ENCODE measurements at regions of chr3 and their contacts with region 1.

Region 1: GRCh38 chr3:187745201-187746058 is at the start of gene BCL6:
- DNase-seq: peak; percentile 93 to 94
- ATAC-seq: peak; percentile 48 to 51
- H3K4me3 ChIP-seq: peak within 1 kb of the TSS; percentile 70 to 94 (median 88)
- H3K27ac ChIP-seq: peak within 1 kb of the TSS; percentile 95 to 100 (median 98)
- H3K4me1 ChIP-seq: peaks cover 22% of the 10 kb centered on the region in 2 donors
- H3K27me3 ChIP-seq: no peaks in the 10 kb centered on the region
- CTCF ChIP-seq: peak in 3 of 5 experiments; percentile 16 to 35 (median 23)
- POLR2A ChIP-seq: peak; percentile 95 to 99
- total RNA-seq, gene BCL6: 223 to 363 (median 292) TPM

Region 2: GRCh38 chr3:187858041-187858440 is 112.6 kb after region 1 on chr3:
- in situ Hi-C with region 1: no loop called
- intact Hi-C with region 1: loop called (anchors 5 kb)
- DNase-seq: peak; percentile 69 to 84
- ATAC-seq: peak; percentile 89 to 91
- H3K4me3 ChIP-seq: no peak overlapping the region
- H3K27ac ChIP-seq: peak overlapping the region; percentile 74 to 87 (median 80)
- H3K4me1 ChIP-seq: peaks cover 25 to 37% of the 10 kb centered on the region in 2 donors
- H3K27me3 ChIP-seq: no peaks in the 10 kb centered on the region
- CTCF ChIP-seq: no peak
- POLR2A ChIP-seq: no peak

Region 3: DNA sequence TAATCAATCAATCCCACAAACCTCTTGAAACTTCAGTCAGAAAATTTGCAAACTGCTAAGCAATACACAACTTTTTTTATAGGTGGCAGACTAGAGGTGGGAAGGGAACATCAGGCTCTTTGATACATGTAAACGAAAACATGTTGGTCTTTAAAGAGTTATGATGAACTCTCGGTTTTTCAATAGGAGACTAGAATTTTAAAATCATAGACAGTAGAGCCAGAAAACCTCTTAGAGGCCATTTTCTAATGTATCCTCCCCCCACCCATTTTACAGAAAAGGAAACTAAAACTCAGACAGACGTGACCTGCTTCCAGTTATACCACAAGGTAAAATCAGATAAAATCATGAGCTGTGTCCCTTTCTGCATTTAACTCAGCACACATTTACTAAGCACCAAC is 229.4 kb after region 1 on chr3:
- in situ Hi-C with region 1: loop called in 1 of 4 experiments (anchors 10 kb)
- intact Hi-C with region 1: no loop called
- DNase-seq: no peak
- ATAC-seq: no peak
- H3K4me3 ChIP-seq: no peak overlapping the region
- H3K27ac ChIP-seq: peak overlapping the region; percentile 22 to 89 (median 72)
- H3K4me1 ChIP-seq: peaks cover 12 to 24% of the 10 kb centered on the region in 2 donors
- H3K27me3 ChIP-seq: no peaks in the 10 kb centered on the region
- CTCF ChIP-seq: no peak
- POLR2A ChIP-seq: no peak

Region 4: GRCh38 chr3:188154014-188154808 is 408.8 kb after region 1 on chr3 and contains the start of gene LPP:
- in situ Hi-C with region 1: loop called in 1 of 4 experiments (anchors 10 kb)
- intact Hi-C with region 1: loop called (anchors 1 kb)
- DNase-seq: peak; percentile 53 to 76
- ATAC-seq: peak; percentile 60 to 70
- H3K4me3 ChIP-seq: peak within 1 kb of the TSS; percentile 61 to 96 (median 83)
- H3K27ac ChIP-seq: peak within 1 kb of the TSS; percentile 93 to 98 (median 98)
- H3K4me1 ChIP-seq: peaks cover 44 to 54% of the 10 kb centered on the region in 2 donors
- H3K27me3 ChIP-seq: no peaks in the 10 kb centered on the region
- CTCF ChIP-seq: no peak
- POLR2A ChIP-seq: peak; percentile 78 to 80
- total RNA-seq, gene LPP: 56.0 to 65.7 (median 58.1) TPM

Region 5: GRCh38 chr3:188294823-188295487 is 549.5 kb after region 1 on chr3:
- in situ Hi-C with region 1: loop called in 1 of 4 experiments (anchors 25 kb)
- intact Hi-C with region 1: no loop called
- DNase-seq: peak; percentile 59 to 60
- ATAC-seq: peak; percentile 98
- H3K4me3 ChIP-seq: peak overlapping the region; percentile 16 to 28 (median 24)
- H3K27ac ChIP-seq: peak overlapping the region; percentile 84 to 89 (median 86)
- H3K4me1 ChIP-seq: peaks cover 44 to 47% of the 10 kb centered on the region in 2 donors
- H3K27me3 ChIP-seq: no peaks in the 10 kb centered on the region
- CTCF ChIP-seq: no peak
- POLR2A ChIP-seq: no peak

Region 6: GRCh38 chr3:188578576-188579363 is 833.3 kb after region 1 on chr3:
- in situ Hi-C with region 1: loop called in 3 of 4 experiments (anchors 25 kb)
- intact Hi-C with region 1: loop called (anchors 10 kb)
- DNase-seq: peak; percentile 49 to 77
- ATAC-seq: peak; percentile 82 to 86
- H3K4me3 ChIP-seq: no peak overlapping the region
- H3K27ac ChIP-seq: peak overlapping the region; percentile 10 to 66 (median 46)
- H3K4me1 ChIP-seq: peaks cover 22 to 28% of the 10 kb centered on the region in 2 donors
- H3K27me3 ChIP-seq: no peaks in the 10 kb centered on the region
- CTCF ChIP-seq: no peak
- POLR2A ChIP-seq: no peak

Region 7: GRCh38 chr3:188796122-188796631 is 1050.7 kb after region 1 on chr3:
- in situ Hi-C with region 1: loop called in 1 of 4 experiments (anchors 25 kb)
- intact Hi-C with region 1: no loop called
- DNase-seq: no peak
- ATAC-seq: no peak
- H3K4me3 ChIP-seq: no peak overlapping the region
- H3K27ac ChIP-seq: no peak overlapping the region
- H3K4me1 ChIP-seq: peaks cover 7 to 36% of the 10 kb centered on the region in 2 donors
- H3K27me3 ChIP-seq: no peaks in the 10 kb centered on the region
- CTCF ChIP-seq: no peak
- POLR2A ChIP-seq: no peak

Measured in gastrocnemius medialis (tissue), 4 donors.